Mammary epithelial cell (primary cell): ENCODE measurements at regions of chrX and their contacts with region 1.

Region 1: GRCh38 chrX:121579016-121579760 is 531.8 kb downstream of the GLUD2 start:
- DNase-seq: peak; percentile 12
- H3K4me3 ChIP-seq: no peak overlapping the region
- H3K27ac ChIP-seq: no peak overlapping the region
- H3K4me1 ChIP-seq: no peaks in the 10 kb centered on the region
- H3K27me3 ChIP-seq: no peaks in the 10 kb centered on the region
- CTCF ChIP-seq: peak; percentile 34 to 57

Region 2: DNA sequence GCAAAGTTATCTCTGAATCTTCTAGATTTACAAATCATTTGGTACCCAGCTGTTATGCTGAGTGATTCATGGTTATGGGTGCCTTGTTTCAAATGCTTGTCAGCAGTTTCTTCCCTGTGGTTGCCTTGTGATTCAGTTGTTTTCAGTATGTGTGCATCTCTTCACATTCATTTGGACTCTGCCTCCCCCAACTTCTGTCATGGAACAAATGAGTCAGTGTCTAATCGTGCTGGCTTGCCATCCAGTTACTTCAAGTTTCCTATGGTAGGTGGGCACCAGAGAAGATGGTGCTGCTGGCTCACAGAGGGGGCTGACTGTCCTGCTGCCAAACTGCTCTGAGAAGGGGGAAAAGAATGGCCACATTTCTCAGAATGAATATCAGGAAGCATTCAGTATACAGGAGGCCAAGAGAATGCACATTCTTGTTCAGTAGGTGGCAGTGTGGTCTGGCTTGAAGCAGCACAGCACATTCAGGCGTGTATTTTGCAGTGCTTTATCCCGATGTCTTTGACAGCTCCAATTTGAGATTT is 270.8 kb before region 1 on chrX:
- CTCF ChIA-PET with region 1: no interaction called
- dilution Hi-C with region 1: no loop called
- in situ Hi-C with region 1: no loop called
- intact Hi-C with region 1: loop called (anchors 2 kb)
- DNase-seq: peak; percentile 67
- H3K4me3 ChIP-seq: no peak overlapping the region
- H3K27ac ChIP-seq: no peak overlapping the region
- H3K4me1 ChIP-seq: no peaks in the 10 kb centered on the region
- H3K27me3 ChIP-seq: no peaks in the 10 kb centered on the region
- CTCF ChIP-seq: peak; percentile 38 to 60

Region 3: DNA sequence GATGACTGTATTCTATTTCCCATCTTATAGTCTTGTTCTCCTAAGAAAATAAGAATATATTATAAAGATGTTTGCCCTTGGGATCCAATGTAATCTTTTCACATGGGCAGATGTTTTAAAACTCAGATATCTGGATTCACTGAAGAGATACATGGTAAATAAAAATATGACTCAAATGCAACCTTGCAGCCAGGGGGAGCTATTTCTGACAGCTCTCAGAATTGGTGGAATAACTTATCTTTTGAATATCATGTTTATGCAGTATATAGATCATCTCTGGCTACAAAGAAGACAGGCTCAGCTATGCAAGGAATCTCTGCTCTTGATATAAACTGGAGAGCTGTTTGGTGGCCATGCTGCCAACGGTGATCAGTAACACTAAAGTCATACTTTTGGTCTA is 257.0 kb before region 1 on chrX:
- CTCF ChIA-PET with region 1: no interaction called
- dilution Hi-C with region 1: no loop called
- in situ Hi-C with region 1: no loop called
- intact Hi-C with region 1: loop called (anchors 5 kb)
- DNase-seq: no peak
- H3K4me3 ChIP-seq: no peak overlapping the region
- H3K27ac ChIP-seq: no peak overlapping the region
- H3K4me1 ChIP-seq: no peaks in the 10 kb centered on the region
- H3K27me3 ChIP-seq: peaks cover 2% of the 10 kb centered on the region
- CTCF ChIP-seq: peak; percentile 40 to 46

Region 4: GRCh38 chrX:122703762-122704161 is 1124.6 kb after region 1 on chrX:
- CTCF ChIA-PET with region 1: no interaction called
- dilution Hi-C with region 1: no loop called
- in situ Hi-C with region 1: no loop called
- intact Hi-C with region 1: loop called (anchors 5 kb)
- DNase-seq: peak; percentile 9
- H3K4me3 ChIP-seq: no peak overlapping the region
- H3K27ac ChIP-seq: no peak overlapping the region
- H3K4me1 ChIP-seq: no peaks in the 10 kb centered on the region
- H3K27me3 ChIP-seq: no peaks in the 10 kb centered on the region
- CTCF ChIP-seq: peak; percentile 32 to 54

Region 5: DNA sequence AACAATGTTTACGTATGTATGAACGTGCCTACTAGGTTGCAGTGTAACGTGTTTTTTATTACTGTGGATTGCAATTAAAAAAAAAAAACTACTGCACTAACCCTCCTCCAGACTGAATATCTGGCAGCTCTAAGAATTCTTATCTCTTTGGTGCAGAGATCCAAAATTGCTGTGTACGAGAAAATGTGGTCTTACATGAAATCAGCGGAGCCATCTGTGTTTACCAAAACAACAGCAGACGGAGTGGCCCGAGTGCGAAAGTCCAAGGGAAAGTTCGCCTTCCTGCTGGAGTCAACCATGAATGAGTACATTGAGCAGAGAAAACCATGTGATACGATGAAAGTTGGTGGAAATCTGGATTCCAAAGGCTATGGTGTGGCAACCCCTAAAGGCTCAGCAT is 1885.5 kb after region 1 on chrX:
- CTCF ChIA-PET with region 1: no interaction called
- dilution Hi-C with region 1: no loop called
- in situ Hi-C with region 1: no loop called
- intact Hi-C with region 1: no loop called
- DNase-seq: no peak
- H3K4me3 ChIP-seq: no peak overlapping the region
- H3K27ac ChIP-seq: no peak overlapping the region
- H3K4me1 ChIP-seq: no peaks in the 10 kb centered on the region
- H3K27me3 ChIP-seq: no peaks in the 10 kb centered on the region
- CTCF ChIP-seq: no peak